Transverse colon (tissue), 4 donors: ENCODE measurements at regions of chr13 and their contacts with region 1.

Region 1: GRCh38 chr13:30114571-30115256 is 192.6 kb downstream of the KATNAL1 start:
- DNase-seq: peak; percentile 95
- H3K4me3 ChIP-seq: peak overlapping the region; percentile 32 to 76 (median 70)
- H3K27ac ChIP-seq: peak overlapping the region; percentile 82 to 90 (median 88)
- H3K4me1 ChIP-seq: peaks cover 23 to 40% (median 28%) of the 10 kb centered on the region in 4 donors
- H3K27me3 ChIP-seq: no peaks in the 10 kb centered on the region
- CTCF ChIP-seq: peak; percentile 84 to 95 (median 90)
- EP300 ChIP-seq: no peak
- POLR2A ChIP-seq: no peak

Region 2: GRCh38 chr13:29508130-29508875 is 606.4 kb before region 1 on chr13:
- in situ Hi-C with region 1: loop called (anchors 10 to 25 kb)
- intact Hi-C with region 1: loop called (anchors 5 kb)
- DNase-seq: peak; percentile 88
- H3K4me3 ChIP-seq: no peak overlapping the region
- H3K27ac ChIP-seq: no peak overlapping the region
- H3K4me1 ChIP-seq: peaks cover 0 to 7% (median 4%) of the 10 kb centered on the region in 4 donors
- H3K27me3 ChIP-seq: peaks cover 7% of the 10 kb centered on the region
- CTCF ChIP-seq: peak; percentile 93 to 98 (median 97)
- EP300 ChIP-seq: no peak
- POLR2A ChIP-seq: no peak

Region 3: GRCh38 chr13:29595380-29596063 is 519.2 kb before region 1 on chr13 and contains the start of gene SLC7A1:
- in situ Hi-C with region 1: no loop called
- intact Hi-C with region 1: loop called (anchors 10 kb)
- DNase-seq: peak; percentile 85
- H3K4me3 ChIP-seq: peak within 1 kb of the TSS; percentile 83 to 98 (median 94)
- H3K27ac ChIP-seq: peak within 1 kb of the TSS; percentile 91 to 97 (median 95)
- H3K4me1 ChIP-seq: peaks cover 3 to 19% (median 11%) of the 10 kb centered on the region in 4 donors
- H3K27me3 ChIP-seq: no peaks in the 10 kb centered on the region
- CTCF ChIP-seq: no peak
- EP300 ChIP-seq: no peak
- POLR2A ChIP-seq: no peak
- total RNA-seq, gene SLC7A1: 10.8 to 21.4 (median 17.9) TPM

Region 4: GRCh38 chr13:29844441-29844840 is 270.3 kb before region 1 on chr13:
- in situ Hi-C with region 1: loop called in 3 of 4 experiments (anchors 5 to 10 kb)
- intact Hi-C with region 1: no loop called
- DNase-seq: no peak
- H3K4me3 ChIP-seq: no peak overlapping the region
- H3K27ac ChIP-seq: no peak overlapping the region
- H3K4me1 ChIP-seq: peaks cover 6 to 56% (median 14%) of the 10 kb centered on the region in 4 donors
- H3K27me3 ChIP-seq: no peaks in the 10 kb centered on the region
- CTCF ChIP-seq: no peak
- EP300 ChIP-seq: no peak
- POLR2A ChIP-seq: no peak

Region 5: DNA sequence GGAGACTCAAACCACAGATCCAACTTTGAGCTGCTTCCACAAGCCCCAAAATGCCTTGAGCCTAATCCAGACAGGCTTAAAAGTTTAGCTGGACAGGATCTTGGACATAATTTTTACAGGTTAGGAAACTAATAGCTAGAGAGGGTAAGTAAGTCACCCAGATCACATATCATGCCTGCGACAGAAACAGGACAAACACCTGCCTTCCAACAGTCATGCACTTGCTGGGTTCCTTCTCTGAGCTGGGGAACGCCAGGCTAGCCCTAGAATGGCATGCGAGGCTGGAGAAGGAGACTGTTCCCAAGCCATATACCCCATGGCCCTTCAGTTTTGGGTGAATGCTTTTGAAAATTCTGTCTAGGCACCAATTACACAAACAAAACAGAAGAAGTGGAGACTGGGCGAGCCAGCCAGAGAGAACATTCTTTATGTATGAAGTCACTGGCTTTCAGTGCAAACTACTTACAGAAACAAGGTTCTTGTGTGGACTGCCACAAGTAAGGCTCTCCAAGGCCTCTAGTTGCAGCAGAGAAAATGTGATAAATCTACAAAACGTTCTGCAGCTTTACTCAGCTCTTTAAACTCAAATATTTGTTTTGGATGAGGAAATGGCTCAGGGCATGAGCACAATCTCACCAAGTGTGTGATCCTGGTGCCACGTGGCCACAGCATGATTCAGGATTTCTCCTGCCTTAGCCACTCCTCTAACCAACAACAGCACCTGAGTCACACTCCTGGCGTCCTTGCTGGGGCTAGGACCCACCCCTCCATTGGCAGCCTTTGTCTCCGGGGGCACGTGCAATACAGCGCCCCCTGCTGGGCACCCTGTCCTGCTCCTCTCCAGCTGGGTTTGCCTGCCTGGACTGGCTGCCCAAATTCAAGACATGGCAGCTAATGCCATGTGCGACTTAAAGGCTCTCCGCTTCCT is 190.9 kb before region 1 on chr13:
- in situ Hi-C with region 1: loop called in 2 of 4 experiments (anchors 5 to 10 kb)
- intact Hi-C with region 1: loop called (anchors 10 kb)
- DNase-seq: peak; percentile 91
- H3K4me3 ChIP-seq: no peak overlapping the region
- H3K27ac ChIP-seq: peak overlapping the region; percentile 85 to 89 (median 88)
- H3K4me1 ChIP-seq: peaks cover 38 to 48% (median 41%) of the 10 kb centered on the region in 4 donors
- H3K27me3 ChIP-seq: no peaks in the 10 kb centered on the region
- CTCF ChIP-seq: peak; percentile 80 to 95 (median 84)
- EP300 ChIP-seq: no peak
- POLR2A ChIP-seq: peak; percentile 9

Region 6: DNA sequence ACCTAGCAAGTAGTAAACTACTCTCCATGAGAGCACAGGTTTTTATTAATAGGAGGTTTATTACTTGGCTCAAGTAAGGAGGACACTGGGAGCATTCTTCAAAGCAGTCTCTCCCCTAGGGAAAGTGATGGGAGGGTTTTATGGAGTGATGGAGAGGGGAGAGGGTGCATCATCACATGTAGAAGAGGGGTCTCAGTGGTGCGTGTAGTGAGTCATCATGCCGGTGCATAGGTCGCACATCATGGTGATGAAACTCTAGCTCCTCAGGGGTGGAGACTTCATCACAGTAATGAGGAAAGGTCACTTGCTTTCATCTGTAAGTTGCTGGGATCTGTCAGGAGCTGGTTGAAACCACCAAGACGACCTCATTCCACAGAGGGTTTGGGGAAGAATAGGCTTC is 53.5 kb before region 1 on chr13:
- in situ Hi-C with region 1: no loop called
- intact Hi-C with region 1: no loop called
- DNase-seq: no peak
- H3K4me3 ChIP-seq: no peak overlapping the region
- H3K27ac ChIP-seq: no peak overlapping the region
- H3K4me1 ChIP-seq: no peaks in the 10 kb centered on the region
- H3K27me3 ChIP-seq: no peaks in the 10 kb centered on the region
- CTCF ChIP-seq: no peak
- EP300 ChIP-seq: no peak
- POLR2A ChIP-seq: no peak